ENCODE measurements at regions of chr14 and their contacts with region 1.

Region 1: GRCh38 chr14:76956316-76957090 is 72.0 kb downstream of the IRF2BPL start:
- DNase-seq: peak; percentile 92
- ATAC-seq: peak; percentile 76 to 85

Region 2: GRCh38 chr14:77028384-77029231 is 72.1 kb after region 1 on chr14 and contains the start of gene IRF2BPL:
- intact Hi-C with region 1: loop called (anchors 5 kb)
- DNase-seq: peak; percentile 99
- ATAC-seq: peak; percentile 67 to 77
- total RNA-seq, gene IRF2BPL: 41.4 to 47.5 TPM

Region 3: DNA sequence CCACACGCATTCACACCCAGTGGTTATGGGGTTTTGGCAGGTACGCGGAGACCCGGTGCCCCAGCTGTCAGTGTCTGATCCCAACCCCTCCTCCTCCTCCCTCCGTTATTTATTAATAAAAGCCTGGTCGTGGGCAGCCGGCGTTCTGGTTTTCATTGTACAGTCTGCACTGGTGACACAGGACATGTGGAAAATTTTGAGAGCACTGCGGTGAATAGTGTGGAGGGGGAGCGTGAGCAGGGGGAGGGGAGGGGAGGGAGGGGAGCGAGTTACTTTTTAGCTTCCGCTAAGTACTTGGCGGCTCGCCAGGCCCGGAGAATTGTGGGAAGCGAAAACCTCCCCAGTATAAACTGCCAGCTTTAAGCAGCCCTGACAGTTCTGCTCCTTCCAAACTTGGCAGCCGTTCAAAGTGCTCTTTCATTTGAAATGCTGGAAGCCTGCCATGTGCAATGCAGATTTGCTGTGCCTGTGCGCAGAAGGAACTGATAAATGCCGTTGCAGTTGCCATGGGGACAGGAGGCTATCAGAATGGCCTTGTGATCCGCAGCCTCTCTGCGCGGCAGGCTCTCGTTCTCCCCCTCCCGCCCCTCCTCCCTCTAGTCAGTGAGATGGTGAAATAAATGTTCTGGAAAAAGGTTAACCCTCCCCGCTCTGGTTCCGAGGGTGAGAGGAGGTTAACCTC is 83.7 kb after region 1 on chr14:
- intact Hi-C with region 1: loop called in 1 of 2 experiments (anchors 5 kb)
- DNase-seq: peak; percentile 100
- ATAC-seq: peak; percentile 85 to 86

Measured in left cardiac atrium (tissue), 4 donors.